HCT116 (cell line): ENCODE measurements at regions of chr3 and their contacts with region 1.

Region 1: GRCh38 chr3:183468424-183468823 is 40.0 kb upstream of the MCF2L2 start:
- DNase-seq: no peak
- ATAC-seq: no peak
- H3K4me3 ChIP-seq: no peak overlapping the region
- H3K27ac ChIP-seq: no peak overlapping the region
- H3K4me1 ChIP-seq: peaks cover 3 to 6% of the 10 kb centered on the region in 2 experiments; a peak in 3 of 4 replicates
- H3K27me3 ChIP-seq: no peaks in the 10 kb centered on the region
- CTCF ChIP-seq: no peak
- POLR2A ChIP-seq: no peak
- RAD21 ChIP-seq: no peak

Region 2: DNA sequence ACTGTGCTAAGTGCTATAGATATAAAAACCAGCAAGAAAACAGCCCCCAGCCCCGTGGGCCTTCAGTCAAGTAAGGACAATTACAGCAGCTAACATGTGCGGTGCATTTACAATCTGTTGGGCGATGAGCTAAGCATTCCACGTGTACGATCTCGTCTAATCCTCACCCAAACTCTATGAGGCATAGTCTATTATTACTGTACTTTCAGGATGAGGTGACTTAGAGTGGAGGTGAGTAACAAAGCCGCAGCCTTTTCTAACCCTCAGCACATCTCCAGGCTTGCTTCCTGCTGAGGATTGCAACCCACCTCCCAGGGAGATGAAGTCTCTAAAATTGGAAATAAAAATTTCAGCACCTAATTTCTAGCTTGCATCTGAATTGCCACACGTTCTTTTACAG is 13.2 kb after region 1 on chr3:
- CTCF ChIA-PET with region 1: interaction called, 13 read pairs
- POLR2A ChIA-PET with region 1: no interaction called
- RAD21 ChIA-PET with region 1: interaction called in 1 of 2 experiments, 3 read pairs
- intact Hi-C with region 1: no loop called
- DNase-seq: no peak
- ATAC-seq: no peak
- H3K4me3 ChIP-seq: no peak overlapping the region
- H3K27ac ChIP-seq: no peak overlapping the region
- H3K4me1 ChIP-seq: peaks cover 0 to 4% of the 10 kb centered on the region in 2 experiments; a peak in 2 of 4 replicates
- H3K27me3 ChIP-seq: no peaks in the 10 kb centered on the region
- CTCF ChIP-seq: no peak
- POLR2A ChIP-seq: no peak
- RAD21 ChIP-seq: no peak

Region 3: DNA sequence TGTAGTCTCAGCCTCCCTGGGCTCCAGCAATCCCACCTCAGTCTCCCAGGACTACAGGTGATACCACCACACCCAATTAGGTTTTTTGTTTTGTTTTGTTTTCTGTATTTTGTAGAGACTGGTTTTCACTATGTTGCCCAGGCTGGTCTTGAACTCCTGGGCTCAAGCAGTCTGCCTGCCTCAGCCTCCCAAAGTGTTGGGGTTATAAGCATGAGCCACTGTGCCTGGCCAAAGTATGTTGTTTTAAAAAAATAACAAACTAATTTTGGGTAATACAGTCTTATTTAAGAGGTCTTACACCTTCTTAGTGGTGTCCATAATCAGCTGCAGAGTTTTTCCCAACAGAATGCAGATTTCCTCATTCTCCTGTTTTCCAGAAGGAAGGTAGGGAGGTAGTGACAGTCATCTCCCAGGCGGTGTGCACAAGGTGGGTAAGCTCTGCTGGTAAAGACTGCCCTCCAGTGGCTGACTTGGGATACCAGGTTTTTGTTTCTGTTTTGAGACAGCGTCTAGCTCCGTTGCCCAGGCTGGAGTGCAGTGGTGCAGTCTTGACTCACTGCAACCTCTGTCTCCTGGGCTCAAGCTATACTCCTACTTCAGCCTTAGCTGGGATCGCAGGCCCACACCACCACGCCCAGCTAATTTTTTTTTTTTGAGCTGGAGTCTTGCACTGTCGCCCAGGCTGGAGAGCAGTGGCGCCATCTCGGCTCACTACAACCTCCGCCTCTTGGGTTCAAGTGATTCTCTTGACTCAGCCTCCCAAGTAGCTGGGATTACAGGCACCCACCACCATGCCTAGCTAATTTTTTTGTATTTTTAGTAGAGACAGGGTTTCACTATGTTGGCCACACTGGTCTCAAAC is 298.6 kb after region 1 on chr3:
- CTCF ChIA-PET with region 1: interaction called, 13 read pairs
- POLR2A ChIA-PET with region 1: no interaction called
- RAD21 ChIA-PET with region 1: no interaction called
- intact Hi-C with region 1: loop called (anchors 1 kb)
- DNase-seq: peak; percentile 53
- ATAC-seq: peak; percentile 99
- H3K4me3 ChIP-seq: no peak overlapping the region
- H3K27ac ChIP-seq: no peak overlapping the region
- H3K4me1 ChIP-seq: no peaks in the 10 kb centered on the region
- H3K27me3 ChIP-seq: no peaks in the 10 kb centered on the region
- CTCF ChIP-seq: peak; percentile 70 to 81 (median 80)
- POLR2A ChIP-seq: no peak
- RAD21 ChIP-seq: peak; percentile 89

Region 4: GRCh38 chr3:183884427-183885296 is 416.2 kb after region 1 on chr3 and contains the start of gene PARL:
- CTCF ChIA-PET with region 1: interaction called, 4 read pairs
- POLR2A ChIA-PET with region 1: no interaction called
- RAD21 ChIA-PET with region 1: no interaction called
- intact Hi-C with region 1: loop called (anchors 5 kb)
- DNase-seq: peak; percentile 83
- ATAC-seq: peak; percentile 98
- H3K4me3 ChIP-seq: peak within 1 kb of the TSS; percentile 99 to 100
- H3K27ac ChIP-seq: peak within 1 kb of the TSS; percentile 64
- H3K4me1 ChIP-seq: peaks cover 6 to 16% of the 10 kb centered on the region in 2 experiments; a peak in 3 of 4 replicates
- H3K27me3 ChIP-seq: no peaks in the 10 kb centered on the region
- CTCF ChIP-seq: peak; percentile 79 to 92 (median 90)
- POLR2A ChIP-seq: peak; percentile 64
- RAD21 ChIP-seq: peak; percentile 80
- total RNA-seq, gene PARL: 69.7 TPM